ENCODE measurements at regions of chr11 and their contacts with region 1.

Region 1: DNA sequence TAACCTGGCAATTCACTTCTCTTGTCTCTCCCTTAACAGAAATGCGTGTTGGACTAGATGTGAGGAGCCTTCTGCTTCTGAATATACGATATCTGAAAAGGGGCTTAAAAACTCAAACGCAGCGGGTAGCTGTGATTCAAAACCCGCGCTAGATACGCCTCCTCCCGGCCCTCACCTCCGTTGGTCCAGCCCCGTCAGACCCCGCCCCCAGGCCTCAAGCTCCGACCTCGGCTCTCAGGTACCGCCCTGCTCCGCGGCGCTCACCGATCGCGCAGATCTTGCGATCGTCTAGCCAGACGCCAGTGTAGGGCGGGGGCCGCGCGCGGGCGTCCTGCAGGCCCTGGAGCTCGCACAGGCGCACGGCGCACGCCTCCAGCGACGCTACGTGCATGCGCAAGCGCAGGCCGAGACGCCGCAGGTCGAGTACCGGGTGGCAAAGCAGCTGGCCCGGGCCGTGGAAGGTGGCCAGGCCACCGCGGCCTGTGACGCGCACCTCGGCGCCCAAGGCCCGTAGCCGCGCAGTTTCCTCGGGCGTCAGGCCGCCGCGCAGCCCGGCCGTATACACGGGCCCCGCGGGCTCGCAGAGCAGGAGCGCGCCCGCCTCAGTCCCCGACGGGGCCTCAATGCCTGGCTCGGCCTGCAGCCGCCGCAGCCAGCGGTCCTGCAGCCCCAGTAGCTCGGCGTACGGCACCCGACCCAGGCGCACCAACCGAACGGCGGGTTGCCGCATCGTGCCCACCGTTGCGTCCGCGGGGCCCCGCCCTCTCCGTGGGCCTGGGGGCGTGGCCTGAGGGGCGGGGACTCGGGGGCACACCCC is at the start of gene LIPT2:
- DNase-seq: peak; percentile 99
- ATAC-seq: peak; percentile 96
- H3K4me3 Mint-ChIP-seq: peak within 1 kb of the TSS; percentile 73
- H3K27ac Mint-ChIP-seq: peak within 1 kb of the TSS; percentile 86
- H3K4me1 Mint-ChIP-seq: peaks cover 22% of the 10 kb centered on the region
- H3K27me3 Mint-ChIP-seq: no peaks in the 10 kb centered on the region
- total RNA-seq, gene LIPT2: 4.2 to 5.0 TPM

Region 2: DNA sequence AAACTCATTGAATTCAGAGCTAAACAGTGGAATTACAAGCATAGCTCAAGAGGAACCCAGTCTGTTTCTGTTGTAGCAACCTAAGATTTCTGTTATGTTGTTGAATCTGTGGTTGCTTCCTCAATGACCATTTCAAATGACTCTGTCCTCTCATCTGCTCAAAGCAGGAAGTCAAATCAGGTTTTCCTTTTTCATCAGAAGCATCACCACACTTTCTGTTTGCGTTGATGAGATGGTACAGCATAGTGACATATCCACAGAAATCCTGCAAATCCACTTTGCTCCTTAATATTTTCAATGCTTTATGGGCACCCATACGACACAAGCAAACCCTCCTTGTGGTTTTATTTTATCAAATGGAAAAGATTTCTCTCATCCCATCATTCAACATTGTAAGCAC is 497.9 kb before region 1 on chr11:
- CTCF ChIA-PET with region 1: no interaction called
- POLR2A ChIA-PET with region 1: no interaction called
- intact Hi-C with region 1: loop called in 1 of 2 experiments (anchors 1 kb)
- DNase-seq: no peak
- ATAC-seq: peak; percentile 80
- H3K4me3 Mint-ChIP-seq: peak overlapping the region; percentile 37
- H3K27ac Mint-ChIP-seq: peak overlapping the region; percentile 92
- H3K4me1 Mint-ChIP-seq: peaks cover 72% of the 10 kb centered on the region
- H3K27me3 Mint-ChIP-seq: no peaks in the 10 kb centered on the region

Region 3: DNA sequence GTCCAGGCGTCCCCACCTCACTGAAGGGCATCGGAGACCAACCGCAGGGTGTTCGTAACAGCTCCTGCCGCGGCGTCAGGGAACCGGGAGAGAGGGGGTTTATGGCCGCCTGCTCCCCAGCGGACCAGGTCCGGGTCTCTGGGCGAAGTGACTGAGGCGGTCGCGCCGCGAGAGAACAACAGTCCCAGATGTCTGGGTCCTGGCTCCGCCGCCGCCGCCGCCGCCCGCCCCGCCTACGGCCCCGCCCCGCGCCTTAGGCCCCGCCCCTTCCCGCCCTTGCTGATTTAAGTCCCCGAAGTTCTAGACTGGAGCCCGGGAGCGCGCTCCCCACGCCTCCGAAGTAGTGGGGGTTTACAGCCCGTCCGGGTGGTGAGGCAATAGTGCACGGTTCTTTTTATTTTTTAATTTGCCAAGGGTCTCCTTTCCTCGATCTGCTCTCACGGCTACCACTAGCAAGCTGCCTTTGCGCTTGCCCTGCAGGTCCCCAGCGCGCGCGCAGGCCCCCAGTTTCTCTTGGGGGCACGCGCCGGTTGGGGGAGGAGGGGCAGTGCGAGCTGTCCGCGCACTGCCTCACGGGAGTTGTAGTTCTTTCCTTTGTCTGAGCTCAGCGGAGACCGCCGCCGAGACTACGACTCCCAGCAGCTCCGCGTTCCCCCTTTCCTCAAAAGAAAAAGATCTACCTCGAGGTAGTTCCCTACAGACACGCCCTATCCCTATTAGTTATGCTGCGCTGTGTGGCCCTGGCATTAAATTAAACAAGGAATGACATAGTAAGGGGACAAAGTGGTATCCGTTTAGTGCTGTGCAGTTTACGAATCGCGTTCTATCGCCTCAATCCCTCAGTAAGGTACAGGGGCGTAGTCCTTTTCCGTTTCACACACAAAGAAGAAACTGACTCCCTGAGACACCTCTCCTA is 94.7 kb before region 1 on chr11 and contains the start of gene PGM2L1:
- CTCF ChIA-PET with region 1: no interaction called
- POLR2A ChIA-PET with region 1: interaction called, 4 read pairs
- intact Hi-C with region 1: loop called (anchors 1 to 2 kb)
- DNase-seq: peak; percentile 96
- ATAC-seq: peak; percentile 88
- H3K4me3 Mint-ChIP-seq: peak within 1 kb of the TSS; percentile 92
- H3K27ac Mint-ChIP-seq: peak within 1 kb of the TSS; percentile 100
- H3K4me1 Mint-ChIP-seq: peaks cover 39% of the 10 kb centered on the region
- H3K27me3 Mint-ChIP-seq: no peaks in the 10 kb centered on the region
- total RNA-seq, gene PGM2L1: 8.8 to 11.0 TPM

Region 4: GRCh38 chr11:74748211-74749127 is 255.3 kb after region 1 on chr11 and contains the start of gene RNF169:
- CTCF ChIA-PET with region 1: no interaction called
- POLR2A ChIA-PET with region 1: no interaction called
- intact Hi-C with region 1: loop called in 1 of 2 experiments (anchors 1 kb)
- DNase-seq: peak; percentile 93
- ATAC-seq: peak; percentile 97
- H3K4me3 Mint-ChIP-seq: peak within 1 kb of the TSS; percentile 80
- H3K27ac Mint-ChIP-seq: peak within 1 kb of the TSS; percentile 73
- H3K4me1 Mint-ChIP-seq: peaks cover 29% of the 10 kb centered on the region
- H3K27me3 Mint-ChIP-seq: no peaks in the 10 kb centered on the region
- total RNA-seq, gene RNF169: 15.3 to 16.0 TPM

Region 5: DNA sequence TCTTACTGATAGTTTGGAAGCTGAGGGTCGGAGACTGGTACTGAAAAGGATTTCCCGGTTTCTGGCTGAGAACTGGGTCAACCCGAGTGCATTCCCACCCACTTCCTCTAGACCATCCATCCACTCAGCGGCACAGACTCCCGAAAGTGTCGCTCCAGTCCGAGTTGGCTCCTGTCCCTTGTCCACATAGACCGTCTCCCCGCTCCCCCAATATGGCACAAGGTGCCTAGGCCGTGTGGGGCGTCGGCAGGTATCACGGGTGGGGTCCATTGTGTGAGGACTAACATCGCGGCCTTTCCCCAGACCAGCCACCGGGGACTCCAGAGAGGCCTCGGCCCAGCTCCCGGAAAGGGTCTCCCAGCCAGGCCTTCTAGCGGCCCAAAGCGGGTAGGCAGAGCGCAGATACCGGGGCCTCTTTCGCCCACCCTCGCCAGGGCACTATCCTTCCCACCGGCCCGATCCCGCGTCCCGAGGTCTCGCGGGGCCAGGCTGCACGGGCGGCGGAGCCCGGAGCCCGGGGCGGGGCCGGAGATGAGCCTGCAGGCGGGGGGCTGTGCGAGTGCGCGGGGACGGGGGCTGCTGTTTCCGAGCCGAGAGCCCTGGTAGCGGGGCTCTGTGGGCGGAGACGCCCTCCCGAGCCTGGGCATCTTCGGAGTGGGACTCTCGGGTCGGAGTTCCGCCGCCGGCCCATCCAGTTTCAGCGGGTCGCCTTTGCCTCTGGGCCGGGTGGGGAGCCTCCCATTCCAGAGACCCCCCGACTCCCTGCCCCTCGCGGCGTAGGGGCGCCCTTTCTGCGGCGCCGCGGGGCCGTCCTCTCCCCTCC is 1089.9 kb after region 1 on chr11:
- CTCF ChIA-PET with region 1: no interaction called
- POLR2A ChIA-PET with region 1: no interaction called
- intact Hi-C with region 1: loop called in 1 of 2 experiments (anchors 5 kb)
- DNase-seq: peak; percentile 79
- ATAC-seq: peak; percentile 94
- H3K4me3 Mint-ChIP-seq: peak overlapping the region; percentile 75
- H3K27ac Mint-ChIP-seq: peak overlapping the region; percentile 83
- H3K4me1 Mint-ChIP-seq: peaks cover 13% of the 10 kb centered on the region
- H3K27me3 Mint-ChIP-seq: no peaks in the 10 kb centered on the region

Measured in activated CD4-positive, alpha-beta T cell treated with anti-CD3 and anti-CD28 coated beads for 36 hours (primary cell).